ENCODE measurements at regions of chr9 and their contacts with region 1.

Region 1: DNA sequence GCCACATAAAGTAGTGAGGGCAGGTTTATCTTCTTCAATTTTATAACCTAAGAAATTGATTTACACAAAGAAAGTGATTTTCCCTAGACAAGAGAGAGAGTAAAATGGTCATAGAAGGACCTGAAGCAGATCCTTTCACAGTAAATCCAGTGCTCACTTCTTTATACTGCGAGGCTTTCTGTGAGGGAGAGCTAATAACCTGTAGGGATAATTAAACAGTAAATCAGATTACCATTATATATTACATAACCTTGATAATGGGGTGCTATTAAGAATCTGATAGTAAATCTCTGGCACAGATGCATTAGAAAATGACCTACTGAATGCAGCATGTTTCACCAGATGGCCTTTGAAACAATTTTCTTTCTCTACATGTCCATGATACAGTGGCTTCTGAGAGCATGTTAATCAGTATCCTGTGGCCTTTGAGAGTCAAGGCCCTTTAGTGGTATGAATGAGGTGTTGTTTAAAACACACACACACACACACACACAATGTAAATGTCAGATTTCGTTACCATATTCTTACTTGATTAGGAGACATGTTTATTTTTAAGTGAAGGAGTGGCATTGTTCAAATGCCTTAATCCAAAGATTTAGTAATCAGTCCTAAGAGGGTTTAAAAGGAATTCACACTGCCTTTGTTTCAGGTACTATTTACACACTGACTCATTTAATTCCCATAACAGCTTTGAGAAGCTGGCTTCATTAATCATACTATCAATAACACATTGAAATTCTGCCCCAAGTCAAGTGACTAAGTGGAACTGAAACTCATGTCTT is 124.7 kb downstream of the ALDH1A1 start:
- DNase-seq: no peak

Region 2: DNA sequence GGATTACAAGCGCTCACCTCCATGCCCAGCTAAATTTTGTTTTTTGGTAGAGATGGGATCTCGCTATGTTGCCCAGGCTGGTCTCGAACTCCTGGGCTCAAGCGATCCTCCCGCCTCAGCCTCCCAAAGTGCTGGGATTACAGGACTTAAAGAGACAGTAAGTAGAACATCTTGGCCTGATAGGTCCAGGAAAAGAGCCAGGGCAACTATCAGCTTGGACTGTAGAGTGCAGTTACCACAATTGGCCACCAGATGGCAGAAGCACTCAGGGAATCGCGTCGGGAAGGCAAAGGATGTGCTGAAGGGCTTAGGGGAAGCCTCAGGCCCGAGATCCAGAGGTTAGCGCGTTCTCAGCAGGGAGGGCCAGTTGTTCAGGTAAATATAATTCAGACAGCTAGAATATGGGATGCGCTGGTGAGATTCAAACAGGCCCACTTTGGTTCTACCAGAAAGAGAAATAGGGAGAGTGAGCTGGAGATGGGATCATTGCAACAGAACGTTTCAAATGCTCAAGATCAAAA is 789.2 kb before region 1 on chr9:
- intact Hi-C with region 1: loop called (anchors 5 kb)
- DNase-seq: peak; percentile 60 to 95 (median 85)

Region 3: GRCh38 chr9:72292256-72292682 is 535.9 kb before region 1 on chr9:
- intact Hi-C with region 1: loop called (anchors 5 kb)
- DNase-seq: no peak

Region 4: GRCh38 chr9:72356041-72356582 is 472.0 kb before region 1 on chr9:
- intact Hi-C with region 1: loop called (anchors 10 kb)
- DNase-seq: peak in 1 of 10 donors; percentile 11

Region 5: DNA sequence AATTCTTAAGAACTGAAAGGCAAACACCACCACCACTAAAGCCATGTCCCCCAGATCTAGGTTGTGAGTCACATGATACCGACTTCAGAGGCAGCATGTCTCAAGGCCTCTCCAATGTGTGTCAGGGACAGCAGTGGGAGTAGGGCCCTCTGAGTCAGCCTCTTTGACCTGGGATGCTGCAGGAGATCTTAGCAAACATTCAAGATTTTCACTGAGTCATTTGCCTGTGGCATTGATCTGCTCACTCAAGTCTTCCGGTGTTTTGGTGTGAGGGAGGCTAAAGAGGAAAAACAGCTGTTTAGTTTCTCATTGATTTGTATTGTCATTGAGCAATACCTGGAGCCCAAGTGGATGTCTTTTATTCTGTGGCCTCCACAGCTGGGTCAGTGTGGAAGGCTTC is 270.6 kb before region 1 on chr9:
- intact Hi-C with region 1: no loop called
- DNase-seq: no peak

Region 6: GRCh38 chr9:72680593-72681282 is 147.4 kb before region 1 on chr9:
- intact Hi-C with region 1: no loop called
- DNase-seq: peak in 1 of 10 donors; percentile 21

Region 7: GRCh38 chr9:72753266-72753893 is 74.8 kb before region 1 on chr9:
- intact Hi-C with region 1: no loop called
- DNase-seq: peak in 1 of 10 donors; percentile 54

Region 8: GRCh38 chr9:72894342-72894741 is 66.2 kb after region 1 on chr9:
- intact Hi-C with region 1: no loop called
- DNase-seq: no peak